HCT116 (cell line): ENCODE measurements at regions of chr9 and their contacts with region 1.

Region 1: GRCh38 chr9:73023025-73023541 is 70.2 kb upstream of the ALDH1A1 start:
- DNase-seq: peak; percentile 62
- ATAC-seq: peak; percentile 76
- H3K4me3 ChIP-seq: no peak overlapping the region
- H3K27ac ChIP-seq: no peak overlapping the region
- H3K4me1 ChIP-seq: 0 out of 4 replicates have a peak, but pooled peaks cover 0 to 4% of the 10 kb centered on the region in 2 experiments
- H3K27me3 ChIP-seq: no peaks in the 10 kb centered on the region
- CTCF ChIP-seq: peak; percentile 66 to 83 (median 82); a peak in 5 of 6 replicates
- POLR2A ChIP-seq: no peak
- RAD21 ChIP-seq: peak; percentile 69

Region 2: DNA sequence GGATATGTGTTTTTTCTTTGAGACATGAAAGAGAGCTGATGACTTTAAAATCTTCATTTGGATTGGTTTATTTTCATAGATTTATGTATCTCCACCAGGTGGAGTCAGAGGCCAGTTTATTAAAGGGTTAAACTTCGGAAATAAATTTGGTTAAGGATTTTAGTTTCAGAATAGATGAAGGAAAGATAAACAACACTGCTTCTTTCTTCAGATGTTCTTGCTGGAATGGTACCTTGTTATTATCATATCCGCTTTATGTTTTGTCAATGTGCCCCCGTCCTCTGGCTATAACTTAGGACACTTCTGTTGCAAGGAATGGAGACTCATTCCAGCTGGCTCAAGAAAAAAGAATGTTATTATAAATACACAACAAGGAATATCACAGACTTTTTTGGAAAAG is 151.4 kb before region 1 on chr9:
- CTCF ChIA-PET with region 1: interaction called, 29 read pairs
- POLR2A ChIA-PET with region 1: no interaction called
- RAD21 ChIA-PET with region 1: interaction called in 1 of 2 experiments, 5 read pairs
- intact Hi-C with region 1: loop called (anchors 5 kb)
- DNase-seq: peak; percentile 26
- ATAC-seq: peak; percentile 42
- H3K4me3 ChIP-seq: no peak overlapping the region
- H3K27ac ChIP-seq: no peak overlapping the region
- H3K4me1 ChIP-seq: no peaks in the 10 kb centered on the region
- H3K27me3 ChIP-seq: no peaks in the 10 kb centered on the region
- CTCF ChIP-seq: peak; percentile 31 to 71 (median 69); a peak in 4 of 6 replicates
- POLR2A ChIP-seq: no peak
- RAD21 ChIP-seq: peak; percentile 76

Region 3: GRCh38 chr9:73011181-73011750 is 11.8 kb before region 1 on chr9:
- CTCF ChIA-PET with region 1: interaction called, 14 read pairs
- POLR2A ChIA-PET with region 1: no interaction called
- RAD21 ChIA-PET with region 1: no interaction called
- intact Hi-C with region 1: no loop called
- DNase-seq: no peak
- ATAC-seq: no peak
- H3K4me3 ChIP-seq: no peak overlapping the region
- H3K27ac ChIP-seq: no peak overlapping the region
- H3K4me1 ChIP-seq: no peaks in the 10 kb centered on the region
- H3K27me3 ChIP-seq: no peaks in the 10 kb centered on the region
- CTCF ChIP-seq: no peak
- POLR2A ChIP-seq: no peak
- RAD21 ChIP-seq: no peak

Region 4: GRCh38 chr9:73104342-73104741 is 81.3 kb after region 1 on chr9:
- CTCF ChIA-PET with region 1: no interaction called
- POLR2A ChIA-PET with region 1: no interaction called
- RAD21 ChIA-PET with region 1: no interaction called
- intact Hi-C with region 1: loop called (anchors 5 kb)
- DNase-seq: no peak
- ATAC-seq: no peak
- H3K4me3 ChIP-seq: no peak overlapping the region
- H3K27ac ChIP-seq: no peak overlapping the region
- H3K4me1 ChIP-seq: peaks cover 0 to 12% of the 10 kb centered on the region in 2 experiments; a peak in 2 of 4 replicates
- H3K27me3 ChIP-seq: no peaks in the 10 kb centered on the region
- CTCF ChIP-seq: no peak
- POLR2A ChIP-seq: no peak
- RAD21 ChIP-seq: no peak

Region 5: GRCh38 chr9:73116031-73116430 is 92.9 kb after region 1 on chr9:
- CTCF ChIA-PET with region 1: no interaction called
- POLR2A ChIA-PET with region 1: no interaction called
- RAD21 ChIA-PET with region 1: no interaction called
- intact Hi-C with region 1: no loop called
- DNase-seq: no peak
- ATAC-seq: no peak
- H3K4me3 ChIP-seq: no peak overlapping the region
- H3K27ac ChIP-seq: no peak overlapping the region
- H3K4me1 ChIP-seq: peaks cover 14 to 40% of the 10 kb centered on the region in 2 experiments
- H3K27me3 ChIP-seq: no peaks in the 10 kb centered on the region
- CTCF ChIP-seq: no peak
- POLR2A ChIP-seq: no peak
- RAD21 ChIP-seq: 0 out of 2 replicates have a peak, but pooled peaks have one; percentile 1

Region 6: GRCh38 chr9:73194284-73194683 is 171.2 kb after region 1 on chr9:
- CTCF ChIA-PET with region 1: no interaction called
- POLR2A ChIA-PET with region 1: no interaction called
- RAD21 ChIA-PET with region 1: no interaction called
- intact Hi-C with region 1: no loop called
- DNase-seq: no peak
- ATAC-seq: no peak
- H3K4me3 ChIP-seq: no peak overlapping the region
- H3K27ac ChIP-seq: no peak overlapping the region
- H3K4me1 ChIP-seq: no peaks in the 10 kb centered on the region
- H3K27me3 ChIP-seq: no peaks in the 10 kb centered on the region
- CTCF ChIP-seq: no peak
- POLR2A ChIP-seq: no peak
- RAD21 ChIP-seq: no peak